Left ventricle myocardium inferior (tissue), 1 donor: ENCODE measurements at regions of chr2 and their contacts with region 1.

Region 1: DNA sequence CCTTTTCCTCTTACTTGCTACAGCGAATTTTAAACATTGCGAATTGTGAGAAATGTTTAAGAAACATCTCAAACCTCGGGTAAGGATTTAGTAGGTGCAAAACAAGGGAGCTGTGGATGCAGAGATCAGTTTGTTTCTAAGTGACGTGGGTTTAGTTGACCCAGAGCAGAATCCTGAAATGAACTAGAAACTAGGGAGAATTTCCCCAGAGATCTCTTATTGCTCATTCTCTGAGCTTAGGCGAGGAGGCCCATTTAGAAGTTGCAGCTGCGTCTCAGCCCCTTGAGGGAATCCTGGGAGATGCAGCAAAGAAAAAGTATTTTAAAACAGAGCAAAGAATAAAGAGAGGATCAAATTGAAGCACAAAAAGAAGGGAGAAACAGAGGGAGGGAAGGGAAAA is 29.3 kb downstream of the FAM124B start:
- DNase-seq: no peak
- H3K4me3 ChIP-seq: no peak overlapping the region
- H3K27ac ChIP-seq: no peak overlapping the region
- H3K4me1 ChIP-seq: peaks cover 9% of the 10 kb centered on the region
- H3K27me3 ChIP-seq: no peaks in the 10 kb centered on the region
- CTCF ChIP-seq: no peak

Region 2: DNA sequence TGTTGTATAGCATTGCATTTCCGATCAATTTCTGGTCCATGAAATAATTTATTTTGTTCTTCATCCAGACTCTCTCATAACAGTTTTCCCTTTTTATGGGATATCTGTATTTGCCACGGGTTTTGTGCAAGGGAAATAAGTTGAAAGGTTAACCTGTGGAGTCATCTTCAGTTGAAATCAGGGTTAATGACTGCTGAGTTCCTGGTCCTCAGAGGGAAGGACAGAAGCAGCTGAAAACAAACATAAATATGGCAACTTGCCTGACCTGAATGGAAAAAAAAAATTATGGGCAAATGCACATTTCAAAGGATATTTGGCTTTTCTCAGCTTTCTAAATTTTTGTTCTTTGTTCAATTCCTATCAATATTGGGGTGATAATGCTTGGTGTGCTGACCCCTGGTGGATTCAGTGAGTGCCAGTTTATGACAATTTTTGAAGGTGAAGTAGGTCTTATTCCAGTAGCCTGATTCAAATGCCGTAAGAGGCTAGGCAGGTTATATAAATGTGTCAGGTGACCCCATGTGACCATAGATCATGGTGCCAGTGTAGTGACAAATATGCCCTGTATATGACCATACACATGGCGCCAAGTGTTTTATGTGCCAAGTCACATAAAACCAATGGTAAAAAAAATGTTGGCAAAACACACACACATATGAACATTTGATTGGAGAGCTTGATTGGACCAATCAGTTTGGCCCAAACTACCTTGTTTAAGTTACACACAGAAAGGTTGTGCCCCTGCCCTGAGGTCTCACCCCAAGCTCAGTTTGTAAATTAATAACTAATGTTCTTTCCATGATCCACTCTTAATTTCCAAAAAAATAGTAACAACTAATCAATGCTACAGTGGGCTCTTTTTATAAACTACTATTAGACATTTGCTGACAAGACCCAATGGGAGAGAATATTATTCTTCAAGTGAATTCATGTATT is 76.8 kb after region 1 on chr2:
- intact Hi-C with region 1: loop called (anchors 5 kb)
- DNase-seq: no peak
- H3K4me3 ChIP-seq: no peak overlapping the region
- H3K27ac ChIP-seq: no peak overlapping the region
- H3K4me1 ChIP-seq: no peaks in the 10 kb centered on the region
- H3K27me3 ChIP-seq: peaks cover 7% of the 10 kb centered on the region
- CTCF ChIP-seq: peak; percentile 66

Region 3: GRCh38 chr2:224594840-224595239 is 222.2 kb after region 1 on chr2:
- intact Hi-C with region 1: no loop called
- DNase-seq: no peak
- H3K4me3 ChIP-seq: no peak overlapping the region
- H3K27ac ChIP-seq: no peak overlapping the region
- H3K4me1 ChIP-seq: no peaks in the 10 kb centered on the region
- H3K27me3 ChIP-seq: no peaks in the 10 kb centered on the region
- CTCF ChIP-seq: no peak